Activated CD4-positive, alpha-beta T cell treated with anti-CD3 and anti-CD28 coated beads for 36 hours (primary cell): ENCODE measurements at regions of chr5 and their contacts with region 1.

Region 1: DNA sequence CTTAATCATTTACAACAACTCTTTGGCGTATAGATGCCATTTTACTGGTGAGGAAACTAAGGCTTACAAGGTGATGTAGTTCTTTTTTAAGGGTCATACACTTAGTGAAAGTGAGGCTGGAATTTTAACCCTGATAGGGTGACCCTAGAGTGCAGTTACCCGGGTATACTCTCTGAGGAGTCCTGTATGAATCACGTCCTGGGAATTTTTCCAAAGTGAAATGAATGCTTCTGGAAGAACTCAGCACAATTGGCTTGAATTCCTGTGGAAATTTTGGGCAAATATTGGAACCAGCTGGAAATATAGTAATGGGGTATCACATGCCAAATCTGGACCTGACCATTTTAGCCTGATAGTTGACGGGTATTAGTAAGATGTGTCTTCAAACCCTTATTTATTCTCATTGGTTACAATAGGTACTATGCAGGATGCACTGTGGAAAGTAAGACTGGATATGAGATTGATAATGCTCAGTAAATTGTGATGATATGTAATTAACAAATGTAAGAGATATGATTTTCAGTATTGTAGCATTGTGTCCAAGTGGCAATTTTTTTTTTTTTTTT is 14.8 kb downstream of the SUB1 start:
- DNase-seq: no peak
- ATAC-seq: no peak
- H3K4me3 Mint-ChIP-seq: no peak overlapping the region
- H3K27ac Mint-ChIP-seq: no peak overlapping the region
- H3K4me1 Mint-ChIP-seq: peaks cover 53% of the 10 kb centered on the region
- H3K27me3 Mint-ChIP-seq: no peaks in the 10 kb centered on the region

Region 2: DNA sequence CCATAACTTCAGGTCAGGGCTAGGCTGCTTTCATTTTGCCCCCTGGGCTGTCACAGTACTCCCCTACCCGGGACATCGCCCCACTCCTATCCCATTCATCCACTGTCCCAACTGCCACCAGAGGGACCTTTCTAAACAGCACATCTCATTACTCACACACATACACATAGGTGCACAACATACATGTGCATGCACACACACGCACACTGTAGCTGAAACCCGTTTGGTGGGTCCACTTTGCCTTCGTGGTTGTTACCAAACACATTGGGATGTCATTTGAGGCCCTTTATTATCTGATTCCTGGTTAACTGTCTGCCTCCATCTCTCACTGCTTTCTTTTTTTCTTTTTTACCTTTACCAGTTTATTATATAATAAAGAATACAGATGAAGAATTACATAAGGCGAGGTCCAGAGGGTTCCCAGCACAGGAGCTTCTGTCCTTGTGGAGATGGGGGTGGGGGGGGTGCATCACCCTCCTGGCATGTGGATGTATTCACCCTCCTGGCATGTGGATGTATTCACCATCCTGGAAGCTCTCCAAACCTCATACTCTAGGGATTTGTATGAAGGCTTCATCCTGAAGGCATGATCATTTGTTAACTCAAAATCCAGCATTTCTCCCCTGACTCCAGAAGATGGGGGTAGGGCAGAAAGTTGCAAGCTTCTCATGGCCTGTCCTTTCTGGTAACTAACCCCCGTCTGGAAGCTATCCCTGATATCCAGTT is 612.0 kb before region 1 on chr5:
- CTCF ChIA-PET with region 1: no interaction called
- POLR2A ChIA-PET with region 1: interaction called, 10 read pairs
- intact Hi-C with region 1: no loop called
- DNase-seq: no peak
- ATAC-seq: no peak
- H3K4me3 Mint-ChIP-seq: no peak overlapping the region
- H3K27ac Mint-ChIP-seq: no peak overlapping the region
- H3K4me1 Mint-ChIP-seq: no peaks in the 10 kb centered on the region
- H3K27me3 Mint-ChIP-seq: no peaks in the 10 kb centered on the region

Region 3: GRCh38 chr5:32462618-32463017 is 137.5 kb before region 1 on chr5:
- CTCF ChIA-PET with region 1: no interaction called
- POLR2A ChIA-PET with region 1: no interaction called
- intact Hi-C with region 1: no loop called
- DNase-seq: peak; percentile 73
- ATAC-seq: peak; percentile 100
- H3K4me3 Mint-ChIP-seq: no peak overlapping the region
- H3K27ac Mint-ChIP-seq: peak overlapping the region; percentile 90
- H3K4me1 Mint-ChIP-seq: peaks cover 17% of the 10 kb centered on the region
- H3K27me3 Mint-ChIP-seq: no peaks in the 10 kb centered on the region

Region 4: DNA sequence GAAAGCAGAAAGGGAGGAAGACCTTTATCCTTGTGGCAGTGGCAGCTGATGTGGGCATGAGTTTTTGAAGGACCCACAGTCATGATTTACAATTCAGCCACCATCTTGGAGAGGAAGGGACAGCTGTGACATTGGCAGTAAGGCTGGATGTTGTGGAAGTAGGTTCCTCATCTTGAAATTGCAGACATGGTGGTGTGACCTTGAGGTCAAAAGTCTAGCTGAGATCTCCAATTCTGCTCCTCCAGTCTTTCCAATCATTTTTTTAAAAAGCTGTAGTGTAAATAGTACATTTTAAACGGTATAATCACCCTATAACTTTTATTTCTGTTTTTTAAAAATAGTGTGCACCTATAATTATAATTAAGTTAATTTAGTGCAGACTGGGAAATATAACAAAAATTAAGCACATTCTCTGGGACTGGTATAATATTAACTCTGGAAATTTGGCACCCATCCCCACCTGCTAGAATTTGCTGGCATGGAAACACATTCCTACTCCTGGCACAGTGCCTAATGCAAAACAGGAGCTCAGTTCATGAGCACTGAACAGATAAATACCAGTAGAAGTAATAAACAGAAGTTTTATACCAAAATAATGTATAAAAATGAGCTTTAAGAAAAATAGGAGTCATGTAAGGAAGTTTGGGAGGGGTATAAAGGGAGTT is 87.2 kb after region 1 on chr5:
- CTCF ChIA-PET with region 1: no interaction called
- POLR2A ChIA-PET with region 1: no interaction called
- intact Hi-C with region 1: no loop called
- DNase-seq: no peak
- ATAC-seq: no peak
- H3K4me3 Mint-ChIP-seq: no peak overlapping the region
- H3K27ac Mint-ChIP-seq: no peak overlapping the region
- H3K4me1 Mint-ChIP-seq: no peaks in the 10 kb centered on the region
- H3K27me3 Mint-ChIP-seq: peaks cover 9% of the 10 kb centered on the region

Region 5: GRCh38 chr5:32709781-32710549 is 109.8 kb after region 1 on chr5:
- CTCF ChIA-PET with region 1: no interaction called
- POLR2A ChIA-PET with region 1: no interaction called
- intact Hi-C with region 1: no loop called
- DNase-seq: peak; percentile 80
- ATAC-seq: peak; percentile 64
- H3K4me3 Mint-ChIP-seq: peak overlapping the region; percentile 68
- H3K27ac Mint-ChIP-seq: no peak overlapping the region
- H3K4me1 Mint-ChIP-seq: peaks cover 27% of the 10 kb centered on the region
- H3K27me3 Mint-ChIP-seq: peaks cover 68% of the 10 kb centered on the region